ENCODE measurements at regions of chr12 and their contacts with region 1.

Region 1: DNA sequence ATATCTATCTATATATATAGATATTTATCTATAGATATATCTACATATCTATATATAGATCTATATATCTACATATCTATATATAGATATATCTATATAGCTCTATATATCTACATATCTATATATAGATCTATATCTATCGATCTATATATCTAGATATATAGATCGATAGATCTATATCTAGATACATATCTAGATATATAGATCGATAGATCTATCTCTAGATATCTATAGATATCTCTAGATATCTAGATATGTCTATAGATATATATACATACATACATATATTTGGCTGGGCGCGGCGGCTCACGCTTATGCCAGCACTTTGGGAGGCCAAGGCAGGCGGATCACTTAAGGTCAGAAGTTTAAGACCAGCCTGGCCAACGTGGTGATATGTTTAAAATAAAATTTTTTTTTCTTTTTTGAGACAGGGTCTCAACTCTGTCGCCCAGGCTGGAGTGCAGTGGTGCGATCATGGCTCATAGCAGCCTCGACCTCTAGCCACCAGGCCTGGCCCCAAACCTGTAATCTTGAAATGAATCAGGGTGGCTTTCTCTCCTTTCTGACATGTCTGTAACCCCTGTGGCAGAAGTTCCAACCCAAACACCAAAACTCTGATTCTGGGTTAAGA is 18.1 kb downstream of the ARPC3 start:
- DNase-seq: no peak
- ATAC-seq: no peak; the same call in 1 of the 2 replicates
- H3K4me3 ChIP-seq: no peak overlapping the region; a peak in 1 of 4 replicates
- H3K27ac ChIP-seq: peak overlapping the region; percentile 35; the same call in 1 of the 2 replicates
- H3K4me1 ChIP-seq: peaks cover 4 to 11% of the 10 kb centered on the region in 2 experiments; a peak in 3 of 4 replicates
- H3K27me3 ChIP-seq: no peaks in the 10 kb centered on the region
- CTCF ChIP-seq: no peak
- POLR2A ChIP-seq: no peak
- RAD21 ChIP-seq: no peak

Region 2: DNA sequence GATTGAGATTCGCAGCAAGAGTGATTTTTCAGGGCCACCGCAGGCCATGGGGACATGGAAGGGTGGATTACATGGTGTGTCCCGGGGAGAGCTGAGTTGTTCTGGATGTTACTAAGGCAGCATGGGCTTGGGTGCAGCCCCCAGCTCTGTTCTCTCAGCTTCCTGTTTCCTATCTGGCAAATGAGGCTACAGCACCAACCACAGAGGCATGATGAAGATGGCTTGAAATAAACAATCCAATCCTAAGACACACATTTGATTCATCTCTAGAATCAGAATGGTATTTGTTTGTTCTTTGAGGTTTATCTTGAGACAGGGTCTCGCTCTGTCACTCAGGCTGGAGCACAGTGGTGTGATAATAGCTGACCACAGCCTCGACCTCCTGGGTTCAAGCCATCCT is 573.3 kb before region 1 on chr12:
- CTCF ChIA-PET with region 1: no interaction called
- POLR2A ChIA-PET with region 1: no interaction called
- RAD21 ChIA-PET with region 1: no interaction called
- intact Hi-C with region 1: loop called (anchors 10 kb)
- DNase-seq: no peak
- ATAC-seq: no peak
- H3K4me3 ChIP-seq: no peak overlapping the region
- H3K27ac ChIP-seq: no peak overlapping the region
- H3K4me1 ChIP-seq: no peaks in the 10 kb centered on the region
- H3K27me3 ChIP-seq: no peaks in the 10 kb centered on the region
- CTCF ChIP-seq: no peak
- POLR2A ChIP-seq: no peak
- RAD21 ChIP-seq: no peak

Region 3: GRCh38 chr12:110100315-110100970 is 331.6 kb before region 1 on chr12:
- CTCF ChIA-PET with region 1: interaction called, 32 read pairs
- POLR2A ChIA-PET with region 1: interaction called, 4 read pairs
- RAD21 ChIA-PET with region 1: interaction called, 3 to 6 read pairs
- intact Hi-C with region 1: loop called (anchors 1 kb)
- DNase-seq: peak; percentile 48
- ATAC-seq: peak; percentile 74
- H3K4me3 ChIP-seq: no peak overlapping the region
- H3K27ac ChIP-seq: no peak overlapping the region
- H3K4me1 ChIP-seq: peaks cover 0 to 5% of the 10 kb centered on the region in 2 experiments; a peak in 2 of 4 replicates
- H3K27me3 ChIP-seq: no peaks in the 10 kb centered on the region
- CTCF ChIP-seq: peak; percentile 89 to 96 (median 93)
- POLR2A ChIP-seq: no peak
- RAD21 ChIP-seq: peak; percentile 93

Region 4: DNA sequence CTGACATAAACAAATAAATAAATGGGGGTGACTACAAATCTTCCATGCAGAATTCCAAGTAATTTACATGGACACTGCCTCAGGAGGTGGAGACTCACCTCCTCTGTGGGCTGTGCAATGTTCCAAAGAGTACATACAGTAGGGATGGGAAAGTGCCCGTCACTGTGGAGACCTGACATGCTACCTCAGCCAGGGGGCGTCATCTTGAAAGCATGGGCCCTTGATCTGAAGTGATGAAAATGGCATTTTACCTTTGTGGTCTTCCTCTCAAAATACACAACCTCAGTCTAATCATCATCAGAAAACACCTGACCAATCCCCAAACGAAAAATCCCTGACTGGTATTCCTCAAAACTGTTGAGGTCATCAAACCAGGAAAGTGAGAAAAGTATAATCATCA is 77.0 kb before region 1 on chr12:
- CTCF ChIA-PET with region 1: interaction called, 7 read pairs
- POLR2A ChIA-PET with region 1: no interaction called
- RAD21 ChIA-PET with region 1: interaction called, 4 read pairs
- intact Hi-C with region 1: loop called (anchors 5 kb)
- DNase-seq: peak; percentile 32
- ATAC-seq: peak; percentile 88
- H3K4me3 ChIP-seq: no peak overlapping the region
- H3K27ac ChIP-seq: no peak overlapping the region
- H3K4me1 ChIP-seq: no peaks in the 10 kb centered on the region
- H3K27me3 ChIP-seq: no peaks in the 10 kb centered on the region
- CTCF ChIP-seq: peak; percentile 55 to 70 (median 61); a peak in 5 of 6 replicates
- POLR2A ChIP-seq: no peak
- RAD21 ChIP-seq: peak; percentile 61

Region 5: DNA sequence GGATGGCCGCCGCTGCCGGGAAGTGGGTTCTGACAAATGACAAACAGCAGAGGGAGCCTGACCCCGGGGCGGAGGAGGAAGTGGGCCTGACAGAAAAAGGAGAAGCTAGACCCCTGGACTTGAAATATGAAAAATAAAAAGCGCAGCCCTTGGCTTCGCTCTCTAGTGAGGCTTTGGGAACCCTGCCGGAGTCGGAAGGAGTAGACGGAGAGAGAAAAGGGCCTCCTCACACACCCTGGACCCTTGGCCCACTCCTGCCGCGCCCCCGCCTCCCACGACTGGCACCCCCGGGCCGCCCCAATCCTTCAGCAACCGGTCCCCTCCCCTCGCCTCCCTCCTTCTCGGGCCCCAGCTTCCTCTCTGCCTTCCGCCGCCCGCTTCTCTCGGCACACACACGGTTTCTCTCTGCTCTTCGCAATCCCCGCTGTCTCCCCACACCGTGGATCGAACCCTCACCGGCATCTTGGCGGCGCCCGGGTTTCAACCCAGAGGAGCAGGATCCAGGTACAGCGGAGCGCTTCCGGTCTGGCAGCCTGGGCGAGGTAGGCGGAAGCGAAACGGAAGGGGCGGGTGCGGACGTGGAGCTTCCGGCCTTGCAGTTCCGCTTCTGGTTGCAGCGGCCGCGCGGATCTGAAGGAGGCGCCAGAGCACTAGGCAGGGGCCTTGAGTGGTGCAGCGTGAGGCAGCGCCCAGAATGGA is 17.9 kb after region 1 on chr12 and contains the start of gene ARPC3:
- CTCF ChIA-PET with region 1: interaction called, 18 read pairs
- POLR2A ChIA-PET with region 1: interaction called, 5 read pairs
- RAD21 ChIA-PET with region 1: interaction called, 3 to 4 read pairs
- intact Hi-C with region 1: no loop called
- DNase-seq: peak; percentile 84
- ATAC-seq: peak; percentile 95
- H3K4me3 ChIP-seq: peak within 1 kb of the TSS; percentile 77 to 95
- H3K27ac ChIP-seq: peak within 1 kb of the TSS; percentile 78
- H3K4me1 ChIP-seq: peaks cover 0 to 13% of the 10 kb centered on the region in 2 experiments; a peak in 2 of 4 replicates
- H3K27me3 ChIP-seq: no peaks in the 10 kb centered on the region
- CTCF ChIP-seq: peak; percentile 81 to 87 (median 85)
- POLR2A ChIP-seq: peak; percentile 50
- RAD21 ChIP-seq: peak; percentile 97
- total RNA-seq, gene ARPC3: 115 TPM

Measured in HCT116 (cell line).